ENCODE measurements at regions of chr17 and their contacts with region 1.

Region 1: DNA sequence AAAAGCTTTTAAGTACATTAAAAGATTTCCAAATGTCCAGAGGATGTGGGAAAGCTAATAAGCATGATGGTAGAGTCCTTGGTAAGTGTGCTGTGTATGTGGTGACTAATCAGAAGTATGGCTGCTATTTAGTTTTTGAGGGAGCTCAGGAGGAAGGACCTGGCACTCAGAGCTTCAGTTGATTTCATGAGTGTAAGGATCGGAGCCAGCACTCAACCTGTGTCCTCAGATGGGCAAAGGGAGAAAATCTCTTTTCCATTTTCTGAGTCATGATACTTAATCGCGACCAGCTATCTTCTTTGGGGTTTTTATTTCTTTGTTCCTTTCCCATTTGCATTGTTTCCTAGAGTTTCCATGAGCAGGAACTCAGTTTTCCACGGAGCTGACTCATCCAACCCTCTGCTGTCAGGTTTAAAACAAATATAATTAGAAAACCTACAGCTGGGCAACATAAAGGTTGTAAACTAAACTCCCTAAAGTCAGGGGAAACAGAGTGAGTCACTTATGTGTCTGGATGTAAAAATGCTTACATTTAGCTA is 125.4 kb downstream of the MAP2K6 start:
- DNase-seq: peak; percentile 80
- H3K4me3 ChIP-seq: no peak overlapping the region
- CTCF ChIP-seq: no peak

Region 2: GRCh38 chr17:69597898-69598692 is 58.2 kb after region 1 on chr17:
- in situ Hi-C with region 1: no loop called
- DNase-seq: no peak
- H3K4me3 ChIP-seq: no peak overlapping the region
- CTCF ChIP-seq: no peak

Region 3: GRCh38 chr17:70604854-70605253 is 1065.0 kb after region 1 on chr17:
- in situ Hi-C with region 1: loop called (anchors 10 kb)
- DNase-seq: no peak
- H3K4me3 ChIP-seq: no peak overlapping the region
- CTCF ChIP-seq: no peak

Measured in astrocyte of the cerebellum (primary cell).